Activated B cell treated with CpG ODN at 0.5 μM for 24 hours (primary cell): ENCODE measurements at regions of chr18 and their contacts with region 1.

Region 1: GRCh38 chr18:2846636-2847364 is at the start of gene EMILIN2:
- DNase-seq: peak; percentile 87
- ATAC-seq: peak; percentile 81
- H3K4me3 Mint-ChIP-seq: peak within 1 kb of the TSS; percentile 96
- H3K27ac Mint-ChIP-seq: peak within 1 kb of the TSS; percentile 94
- H3K4me1 Mint-ChIP-seq: peaks cover 52% of the 10 kb centered on the region
- H3K27me3 Mint-ChIP-seq: peaks cover 8% of the 10 kb centered on the region
- CTCF ChIP-seq: no peak
- total RNA-seq, gene EMILIN2: 73.0 and 80.9 TPM in 2 replicates

Region 2: GRCh38 chr18:2636126-2636631 is 210.6 kb before region 1 on chr18:
- CTCF ChIA-PET with region 1: no interaction called
- POLR2A ChIA-PET with region 1: interaction called, 7 read pairs
- intact Hi-C with region 1: loop called (anchors 1 kb)
- DNase-seq: no peak
- ATAC-seq: peak; percentile 11
- H3K4me3 Mint-ChIP-seq: peak overlapping the region; percentile 72
- H3K27ac Mint-ChIP-seq: peak overlapping the region; percentile 99
- H3K4me1 Mint-ChIP-seq: peaks cover 96% of the 10 kb centered on the region
- H3K27me3 Mint-ChIP-seq: no peaks in the 10 kb centered on the region
- CTCF ChIP-seq: no peak

Region 3: DNA sequence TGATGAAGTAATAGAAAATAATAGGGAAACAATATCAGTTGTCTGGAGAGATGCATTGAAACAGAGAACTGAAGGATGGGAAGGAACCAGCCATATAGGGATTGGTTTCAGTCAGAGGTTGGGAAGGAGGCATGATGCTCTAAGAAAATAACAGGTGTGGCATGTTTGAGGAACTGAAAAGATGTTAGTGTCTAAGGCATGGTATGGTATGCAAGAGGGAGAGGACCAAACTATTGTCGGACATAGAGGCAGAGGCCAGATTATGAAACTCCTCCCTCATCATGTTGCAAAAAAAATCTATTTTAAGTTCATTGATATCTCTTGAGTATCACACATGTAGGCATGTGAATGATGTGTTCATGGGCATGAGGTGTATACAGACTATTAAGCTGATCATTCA is 48.8 kb before region 1 on chr18:
- CTCF ChIA-PET with region 1: interaction called, 3 read pairs
- POLR2A ChIA-PET with region 1: interaction called, 3 read pairs
- intact Hi-C with region 1: loop called (anchors 2 kb)
- DNase-seq: no peak
- ATAC-seq: peak; percentile 52
- H3K4me3 Mint-ChIP-seq: no peak overlapping the region
- H3K27ac Mint-ChIP-seq: peak overlapping the region; percentile 50
- H3K4me1 Mint-ChIP-seq: peaks cover 6% of the 10 kb centered on the region
- H3K27me3 Mint-ChIP-seq: no peaks in the 10 kb centered on the region
- CTCF ChIP-seq: no peak

Region 4: GRCh38 chr18:2881088-2881839 is 34.5 kb after region 1 on chr18:
- CTCF ChIA-PET with region 1: no interaction called
- POLR2A ChIA-PET with region 1: interaction called, 3 read pairs
- intact Hi-C with region 1: loop called (anchors 5 kb)
- DNase-seq: no peak
- ATAC-seq: no peak
- H3K4me3 Mint-ChIP-seq: no peak overlapping the region
- H3K27ac Mint-ChIP-seq: no peak overlapping the region
- H3K4me1 Mint-ChIP-seq: peaks cover 18% of the 10 kb centered on the region
- H3K27me3 Mint-ChIP-seq: no peaks in the 10 kb centered on the region
- CTCF ChIP-seq: no peak

Region 5: DNA sequence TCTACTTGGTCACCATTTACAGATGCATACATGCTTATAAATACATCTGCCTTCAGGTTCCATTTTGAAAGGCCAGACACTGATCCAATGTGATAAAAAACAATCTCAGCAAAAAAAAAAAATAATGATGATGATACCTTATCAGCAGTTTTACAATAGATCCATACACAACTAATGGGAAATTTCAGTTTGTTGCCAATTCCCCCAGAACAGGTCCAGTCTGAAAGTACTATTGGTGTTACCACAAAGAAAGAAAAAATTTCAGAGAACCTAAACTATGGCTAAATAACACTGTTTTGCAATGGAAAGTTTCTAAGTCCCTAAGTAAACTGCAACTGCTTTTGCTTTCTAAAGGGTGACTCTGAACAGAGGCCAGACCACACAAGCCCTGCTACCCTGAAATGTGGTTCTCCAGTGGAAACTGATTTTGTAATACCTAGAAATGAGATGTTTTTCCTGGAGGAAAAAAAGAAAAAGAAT is 112.1 kb after region 1 on chr18:
- CTCF ChIA-PET with region 1: no interaction called
- POLR2A ChIA-PET with region 1: interaction called, 11 read pairs
- intact Hi-C with region 1: no loop called
- DNase-seq: no peak
- ATAC-seq: no peak
- H3K4me3 Mint-ChIP-seq: peak overlapping the region; percentile 32
- H3K27ac Mint-ChIP-seq: peak overlapping the region; percentile 97
- H3K4me1 Mint-ChIP-seq: peaks cover 82% of the 10 kb centered on the region
- H3K27me3 Mint-ChIP-seq: no peaks in the 10 kb centered on the region
- CTCF ChIP-seq: no peak

Region 6: DNA sequence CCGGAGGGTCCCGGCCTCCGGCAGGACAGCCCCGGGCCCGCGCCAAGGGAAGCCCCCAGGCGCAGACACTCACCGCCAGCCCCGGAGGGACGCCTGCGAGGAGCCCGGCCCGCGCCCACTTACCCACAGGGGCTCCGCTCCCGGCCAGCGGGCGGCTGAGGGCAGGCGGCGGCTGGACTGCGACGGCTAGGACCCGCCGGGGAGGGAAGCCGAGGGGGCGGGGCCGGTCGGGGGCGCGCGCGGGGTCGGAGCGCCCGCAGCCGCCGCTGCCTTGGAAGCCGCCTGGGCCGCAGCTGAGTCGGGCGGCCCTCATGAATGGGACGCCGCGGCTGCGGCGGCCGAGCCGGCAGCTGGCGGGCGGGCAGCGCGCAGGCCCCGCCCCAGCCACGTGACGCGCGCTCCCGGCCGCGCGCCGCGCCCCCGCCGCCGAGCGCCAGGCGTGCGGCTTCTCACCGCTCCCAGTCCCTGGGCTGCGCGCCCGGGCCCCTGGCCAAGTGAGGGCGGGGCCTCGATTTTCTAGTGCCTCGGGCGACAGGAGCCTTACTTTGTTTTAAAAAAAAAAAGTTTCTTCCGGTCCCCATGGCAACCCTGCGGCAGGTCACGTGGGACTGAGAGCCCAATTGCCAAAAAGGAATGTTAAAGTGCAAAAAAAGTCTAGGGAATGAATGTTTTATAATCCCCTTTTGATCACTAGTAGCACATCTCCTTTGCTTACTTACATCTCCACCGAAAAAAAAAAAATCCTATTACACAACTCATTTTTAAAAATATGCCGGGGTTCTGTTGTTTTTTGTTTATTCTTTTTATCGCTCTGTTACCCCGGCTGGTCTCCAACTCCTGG is 166.4 kb after region 1 on chr18 and contains the start of gene LPIN2:
- CTCF ChIA-PET with region 1: no interaction called
- POLR2A ChIA-PET with region 1: no interaction called
- intact Hi-C with region 1: loop called (anchors 1 kb)
- DNase-seq: peak; percentile 91
- ATAC-seq: peak; percentile 86
- H3K4me3 Mint-ChIP-seq: peak within 1 kb of the TSS; percentile 95
- H3K27ac Mint-ChIP-seq: peak within 1 kb of the TSS; percentile 88
- H3K4me1 Mint-ChIP-seq: peaks cover 59% of the 10 kb centered on the region
- H3K27me3 Mint-ChIP-seq: no peaks in the 10 kb centered on the region
- CTCF ChIP-seq: no peak
- total RNA-seq, gene LPIN2: 21.8 and 24.4 TPM in 2 replicates